OCI-LY7 (cell line): ENCODE measurements at regions of chr2 and their contacts with region 1.

Region 1: DNA sequence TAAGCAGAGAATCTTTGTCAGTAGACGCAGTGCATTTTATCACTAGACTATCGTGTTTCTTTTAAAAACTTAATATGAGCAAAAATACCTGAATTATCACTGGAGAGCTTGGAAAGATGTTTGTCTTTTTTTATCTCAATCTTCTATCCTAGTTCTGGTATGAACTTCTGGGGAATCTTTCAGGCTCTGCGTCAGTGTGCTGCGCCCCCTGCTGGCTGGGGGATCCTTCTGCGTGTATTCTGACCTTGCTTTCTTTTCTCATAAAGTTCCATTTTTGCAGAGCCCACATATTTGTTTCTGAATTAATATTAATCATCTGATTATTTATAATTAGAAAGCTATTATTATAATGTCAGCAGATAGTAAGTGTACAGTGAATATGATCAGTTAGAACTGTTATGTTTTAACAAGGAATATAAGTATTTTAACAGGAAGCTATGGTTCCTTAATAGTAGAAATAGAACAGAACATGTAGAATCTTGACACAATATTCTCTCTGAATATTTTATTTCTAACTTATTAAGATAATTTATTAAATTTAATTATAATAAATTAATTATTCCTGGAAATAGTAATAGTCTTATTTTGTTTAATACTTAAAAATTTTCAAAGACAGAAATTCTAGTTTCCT is 945.0 kb upstream of the CRIM1 start:
- DNase-seq: peak; percentile 59
- H3K4me3 ChIP-seq: no peak overlapping the region
- H3K27ac ChIP-seq: no peak overlapping the region
- H3K4me1 ChIP-seq: no peaks in the 10 kb centered on the region
- CTCF ChIP-seq: peak; percentile 99

Region 2: DNA sequence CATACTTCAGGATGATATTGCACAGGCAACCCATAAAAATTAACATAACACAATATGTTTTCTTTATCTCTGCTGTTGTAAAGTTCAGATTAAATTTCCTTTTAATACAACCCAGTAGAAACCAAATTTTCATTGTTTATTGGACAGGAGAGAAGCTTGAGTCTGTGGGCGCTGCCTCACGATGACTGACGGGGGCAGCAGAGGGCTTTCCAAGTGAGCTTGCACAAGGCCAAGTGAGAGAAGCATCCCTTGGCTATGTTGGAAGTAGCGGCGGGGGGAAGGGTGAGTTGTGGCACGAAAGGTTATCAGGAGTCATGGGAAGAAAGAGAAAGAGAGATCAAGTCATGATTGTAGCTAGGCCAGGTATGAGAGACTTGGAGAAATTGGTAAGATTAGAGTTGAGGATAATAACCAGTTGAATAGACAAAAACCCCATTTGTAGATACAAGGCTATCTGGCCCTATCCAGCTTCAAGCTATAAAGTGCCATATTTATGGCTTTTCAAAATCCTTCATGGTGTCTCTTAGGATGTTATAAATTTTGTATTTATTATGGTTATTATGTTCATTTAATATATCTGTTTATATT is 1397.7 kb before region 1 on chr2:
- CTCF ChIA-PET with region 1: no interaction called
- POLR2A ChIA-PET with region 1: no interaction called
- intact Hi-C with region 1: loop called (anchors 5 kb)
- DNase-seq: peak; percentile 59
- H3K4me3 ChIP-seq: no peak overlapping the region
- H3K27ac ChIP-seq: no peak overlapping the region
- H3K4me1 ChIP-seq: no peaks in the 10 kb centered on the region
- CTCF ChIP-seq: peak; percentile 85

Region 3: GRCh38 chr2:34096562-34097171 is 1313.9 kb before region 1 on chr2:
- CTCF ChIA-PET with region 1: no interaction called
- POLR2A ChIA-PET with region 1: no interaction called
- intact Hi-C with region 1: loop called (anchors 5 kb)
- DNase-seq: peak; percentile 64
- H3K4me3 ChIP-seq: no peak overlapping the region
- H3K27ac ChIP-seq: no peak overlapping the region
- H3K4me1 ChIP-seq: peaks cover 19% of the 10 kb centered on the region
- CTCF ChIP-seq: peak; percentile 93

Region 4: DNA sequence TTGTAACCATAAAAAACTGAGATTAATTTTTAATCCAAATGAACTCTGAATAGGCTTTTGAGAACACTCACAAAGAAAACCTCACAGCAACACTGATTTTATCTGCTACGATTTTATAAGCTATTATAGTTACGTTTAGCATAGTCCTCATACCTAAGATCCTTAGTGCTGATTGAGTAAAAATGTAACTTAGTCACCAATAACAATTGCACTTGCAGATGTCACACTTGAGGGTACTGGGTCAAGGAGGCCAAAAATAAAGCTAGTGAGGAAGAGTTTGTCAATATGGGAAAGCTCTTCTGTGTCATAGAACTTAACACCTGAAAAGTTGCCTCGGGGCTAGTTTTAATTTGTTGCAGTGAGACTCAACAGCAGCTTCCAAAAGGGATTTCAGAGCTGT is 1105.0 kb before region 1 on chr2:
- CTCF ChIA-PET with region 1: no interaction called
- POLR2A ChIA-PET with region 1: no interaction called
- intact Hi-C with region 1: no loop called
- DNase-seq: no peak
- H3K4me3 ChIP-seq: no peak overlapping the region
- H3K27ac ChIP-seq: no peak overlapping the region
- H3K4me1 ChIP-seq: no peaks in the 10 kb centered on the region
- CTCF ChIP-seq: no peak

Region 5: GRCh38 chr2:35168354-35168753 is 242.2 kb before region 1 on chr2:
- CTCF ChIA-PET with region 1: no interaction called
- POLR2A ChIA-PET with region 1: no interaction called
- intact Hi-C with region 1: loop called (anchors 5 kb)
- DNase-seq: no peak
- H3K4me3 ChIP-seq: no peak overlapping the region
- H3K27ac ChIP-seq: no peak overlapping the region
- H3K4me1 ChIP-seq: no peaks in the 10 kb centered on the region
- CTCF ChIP-seq: peak; percentile 55; the same call in 1 of the 2 replicates

Region 6: DNA sequence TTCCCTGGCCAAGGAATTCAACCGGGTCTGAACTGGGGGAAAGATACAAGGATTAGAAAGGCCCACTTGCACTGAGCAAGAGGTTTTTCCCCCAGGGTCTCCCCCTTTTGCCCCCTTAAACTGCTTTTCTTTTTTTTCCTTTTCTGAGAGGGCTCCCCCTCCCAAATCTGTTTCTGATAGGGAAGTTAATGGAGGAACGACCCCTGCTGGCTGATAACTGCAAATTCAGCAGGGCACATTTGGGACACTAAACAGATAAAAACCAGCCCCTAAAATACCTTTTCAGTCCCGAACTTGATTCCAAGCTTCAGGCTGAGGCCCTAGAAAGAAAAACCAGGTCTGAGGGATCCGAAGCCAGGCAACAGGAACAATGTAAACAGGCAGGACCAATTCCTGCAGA is 67.4 kb before region 1 on chr2:
- CTCF ChIA-PET with region 1: no interaction called
- POLR2A ChIA-PET with region 1: no interaction called
- intact Hi-C with region 1: no loop called
- DNase-seq: peak; percentile 7
- H3K4me3 ChIP-seq: no peak overlapping the region
- H3K27ac ChIP-seq: no peak overlapping the region
- H3K4me1 ChIP-seq: no peaks in the 10 kb centered on the region
- CTCF ChIP-seq: peak; percentile 72